ENCODE measurements at regions of chr5 and their contacts with region 1.

Region 1: DNA sequence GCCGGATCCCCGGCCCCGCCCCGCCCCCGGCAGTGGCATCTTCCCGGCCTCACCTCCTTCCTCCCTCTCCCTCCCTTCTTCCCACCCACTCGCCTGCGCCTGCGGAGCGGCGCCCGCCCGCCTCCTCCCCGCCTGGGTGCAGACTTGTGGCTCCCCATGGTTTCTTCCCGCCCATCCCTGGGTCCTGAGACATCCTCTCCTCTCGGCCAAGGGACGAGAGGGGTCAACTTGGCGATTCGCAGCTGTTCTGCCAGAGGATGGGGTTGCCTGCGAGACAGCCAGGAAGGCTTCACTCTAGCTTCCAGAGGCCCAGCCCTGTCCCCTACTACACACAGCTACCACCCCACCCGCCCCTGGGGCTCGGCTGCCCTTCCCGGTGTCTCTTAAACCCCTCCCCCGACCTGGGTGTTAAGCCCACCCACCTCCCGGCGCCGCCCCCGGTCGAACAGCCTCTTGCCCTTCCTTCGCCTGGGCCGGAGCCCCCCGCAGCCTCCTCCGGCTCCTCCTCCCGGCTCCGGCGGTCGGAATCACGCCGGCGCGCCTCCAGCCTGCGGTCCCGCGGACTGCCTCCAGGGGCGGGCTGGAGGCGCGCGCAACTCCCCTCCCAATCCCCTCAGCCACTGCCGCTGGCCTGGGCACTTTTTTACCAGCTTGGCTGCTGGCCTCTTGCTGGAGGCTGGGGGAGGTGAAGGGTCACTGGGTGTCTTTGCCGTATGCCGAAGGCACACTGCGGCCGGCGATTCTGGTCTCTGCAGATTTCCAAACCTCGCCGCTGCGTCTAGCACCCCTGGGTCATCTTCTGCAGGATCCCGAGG is 1.9 kb downstream of the JADE2 start:
- DNase-seq: peak; percentile 88
- H3K4me3 ChIP-seq: peak overlapping the region; percentile 77
- H3K27ac ChIP-seq: peak overlapping the region; percentile 88
- H3K4me1 ChIP-seq: peaks cover 30% of the 10 kb centered on the region
- CTCF ChIP-seq: peak; percentile 82

Region 2: GRCh38 chr5:134184155-134185135 is 342.9 kb before region 1 on chr5:
- CTCF ChIA-PET with region 1: no interaction called
- POLR2A ChIA-PET with region 1: no interaction called
- intact Hi-C with region 1: no loop called
- DNase-seq: peak; percentile 76
- H3K4me3 ChIP-seq: no peak overlapping the region
- H3K27ac ChIP-seq: no peak overlapping the region
- H3K4me1 ChIP-seq: no peaks in the 10 kb centered on the region
- CTCF ChIP-seq: peak; percentile 88

Region 3: DNA sequence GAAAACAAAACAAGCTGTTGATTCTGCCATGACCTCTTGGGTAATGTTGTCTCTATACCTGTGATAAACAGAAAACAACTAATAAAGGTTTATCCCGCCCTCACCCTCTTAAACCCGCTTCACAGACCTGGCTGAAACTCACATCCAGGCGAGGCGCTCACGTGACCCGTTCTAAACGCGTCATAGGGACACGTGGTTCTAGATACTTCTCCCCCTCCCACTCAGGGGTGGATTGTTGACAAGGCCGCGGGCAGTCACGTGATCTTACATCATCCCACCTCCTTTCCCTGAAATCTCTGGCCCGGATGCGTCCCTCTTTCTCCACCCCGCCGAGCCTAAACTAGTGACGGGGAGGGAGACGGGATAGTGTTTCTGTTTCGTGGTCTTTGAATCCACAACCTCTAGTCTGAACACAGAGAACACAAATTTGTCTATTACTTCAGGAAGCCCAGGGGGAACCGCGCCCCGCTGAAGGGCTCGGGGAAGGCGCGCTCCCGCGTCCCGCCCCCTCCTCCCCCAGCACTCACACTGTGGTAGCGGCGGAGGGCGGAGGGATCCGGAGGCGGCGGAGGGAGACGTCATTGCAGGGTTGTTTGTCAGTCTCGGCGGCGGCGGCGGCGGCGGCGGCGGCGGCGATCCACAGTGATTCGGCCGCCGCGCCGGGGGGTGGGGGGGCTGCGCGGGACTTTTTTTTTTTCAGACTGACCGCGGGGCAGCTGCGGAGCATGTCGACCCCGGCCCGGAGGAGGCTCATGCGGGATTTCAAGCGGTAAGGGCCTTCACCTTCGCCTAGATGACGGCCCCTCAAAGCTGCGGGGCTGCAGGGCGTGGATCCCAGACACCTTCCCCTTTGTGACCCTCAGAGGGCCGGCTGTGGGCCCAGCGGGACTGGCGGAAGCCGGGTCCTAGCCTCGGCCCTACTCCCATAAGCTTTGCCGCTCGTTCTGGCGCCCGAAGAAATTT is 156.2 kb before region 1 on chr5 and contains the start of gene UBE2B:
- CTCF ChIA-PET with region 1: no interaction called
- POLR2A ChIA-PET with region 1: no interaction called
- intact Hi-C with region 1: loop called (anchors 2 kb)
- DNase-seq: peak; percentile 100
- H3K4me3 ChIP-seq: peak within 1 kb of the TSS; percentile 80
- H3K27ac ChIP-seq: peak within 1 kb of the TSS; percentile 62
- H3K4me1 ChIP-seq: peaks cover 25% of the 10 kb centered on the region
- CTCF ChIP-seq: no peak
- total RNA-seq, gene UBE2B: 7.6 and 26.4 TPM in 2 replicates

Region 4: GRCh38 chr5:134541736-134542376 is 14.5 kb after region 1 on chr5:
- CTCF ChIA-PET with region 1: interaction called, 10 read pairs
- POLR2A ChIA-PET with region 1: interaction called, 55 read pairs
- intact Hi-C with region 1: loop called (anchors 1 kb)
- DNase-seq: no peak
- H3K4me3 ChIP-seq: no peak overlapping the region
- H3K27ac ChIP-seq: peak overlapping the region; percentile 61
- H3K4me1 ChIP-seq: peaks cover 75% of the 10 kb centered on the region
- CTCF ChIP-seq: no peak

Region 5: DNA sequence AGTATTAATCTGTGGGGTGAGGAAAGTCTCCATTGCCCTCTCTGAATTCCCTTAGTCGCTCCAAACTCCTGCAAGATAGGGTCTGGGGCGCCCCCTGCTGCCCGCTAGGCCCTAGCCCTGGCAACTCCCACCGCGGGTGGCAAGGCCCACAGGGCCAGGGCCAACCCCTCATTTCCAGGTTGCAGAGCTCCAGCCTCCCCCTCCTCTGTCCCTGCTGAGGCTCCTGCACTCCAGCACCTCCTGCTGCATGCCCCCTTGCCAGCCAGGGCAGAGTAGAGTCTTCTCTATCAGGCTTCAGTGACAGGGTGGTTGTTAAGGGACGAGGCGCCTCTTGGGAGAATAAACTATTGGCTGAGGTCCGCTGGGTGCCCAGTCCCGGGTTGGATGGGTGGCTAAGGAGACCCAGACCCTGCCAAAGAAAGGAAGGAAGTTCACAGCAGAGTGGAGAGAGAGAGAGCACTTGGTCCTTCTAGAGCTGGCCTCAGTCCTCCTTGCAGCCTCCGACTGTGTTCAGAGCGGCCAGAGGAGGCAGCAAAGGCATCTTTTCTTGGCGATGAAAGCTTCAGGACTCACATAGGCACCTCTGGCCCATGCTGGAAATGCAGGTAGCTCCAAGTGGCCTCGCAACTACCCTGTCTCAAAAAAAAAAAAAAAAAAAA is 59.6 kb after region 1 on chr5:
- CTCF ChIA-PET with region 1: no interaction called
- POLR2A ChIA-PET with region 1: interaction called, 6 read pairs
- intact Hi-C with region 1: loop called (anchors 2 kb)
- DNase-seq: peak; percentile 87
- H3K4me3 ChIP-seq: no peak overlapping the region
- H3K27ac ChIP-seq: no peak overlapping the region
- H3K4me1 ChIP-seq: peaks cover 6% of the 10 kb centered on the region
- CTCF ChIP-seq: peak; percentile 99

Measured in OCI-LY7 (cell line).